WTC11 (cell line): ENCODE measurements at regions of chr18 and their contacts with region 1.

Region 1: GRCh38 chr18:37430357-37431076 is 135.1 kb downstream of the CELF4 start:
- DNase-seq: peak; percentile 63
- ATAC-seq: peak; percentile 89
- H3K4me3 Mint-ChIP-seq: no peak overlapping the region
- H3K27ac Mint-ChIP-seq: no peak overlapping the region
- H3K4me1 Mint-ChIP-seq: 0 out of 2 replicates have a peak, but pooled peaks cover 3% of the 10 kb centered on the region
- H3K27me3 Mint-ChIP-seq: no peaks in the 10 kb centered on the region
- CTCF ChIP-seq: no peak

Region 2: DNA sequence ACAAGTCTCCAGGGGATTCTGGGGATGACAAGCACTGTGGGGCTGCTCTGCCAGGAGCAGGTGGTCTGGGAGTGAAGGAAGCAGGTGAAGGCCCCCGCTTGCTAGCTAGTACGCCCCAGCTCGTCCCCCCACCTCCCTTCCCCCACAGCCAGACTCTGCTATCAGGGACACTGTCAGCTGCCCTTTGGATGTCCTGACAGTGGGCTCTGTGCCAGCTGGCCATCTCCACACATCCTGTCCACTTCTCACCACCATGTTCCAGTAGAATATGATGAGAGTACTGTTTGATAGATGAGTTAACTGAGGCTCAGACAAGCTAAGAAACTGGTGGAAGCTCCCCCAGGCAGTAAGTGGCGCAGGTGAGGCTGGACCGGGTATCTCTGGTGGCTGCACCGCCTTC is 141.1 kb before region 1 on chr18:
- CTCF ChIA-PET with region 1: no interaction called
- POLR2A ChIA-PET with region 1: no interaction called
- DNase-seq: no peak
- ATAC-seq: no peak
- H3K4me3 Mint-ChIP-seq: no peak overlapping the region
- H3K27ac Mint-ChIP-seq: no peak overlapping the region
- H3K4me1 Mint-ChIP-seq: peaks cover 4% of the 10 kb centered on the region; the same call in 1 of the 2 replicates
- H3K27me3 Mint-ChIP-seq: no peaks in the 10 kb centered on the region; the same call in 1 of the 2 replicates
- CTCF ChIP-seq: no peak

Region 3: GRCh38 chr18:37445368-37445767 is 14.9 kb after region 1 on chr18:
- CTCF ChIA-PET with region 1: interaction called, 14 read pairs
- POLR2A ChIA-PET with region 1: no interaction called
- DNase-seq: no peak
- ATAC-seq: no peak
- H3K4me3 Mint-ChIP-seq: no peak overlapping the region
- H3K27ac Mint-ChIP-seq: no peak overlapping the region
- H3K4me1 Mint-ChIP-seq: peaks cover 41% of the 10 kb centered on the region
- H3K27me3 Mint-ChIP-seq: peaks cover 7% of the 10 kb centered on the region; the same call in 1 of the 2 replicates
- CTCF ChIP-seq: no peak

Region 4: DNA sequence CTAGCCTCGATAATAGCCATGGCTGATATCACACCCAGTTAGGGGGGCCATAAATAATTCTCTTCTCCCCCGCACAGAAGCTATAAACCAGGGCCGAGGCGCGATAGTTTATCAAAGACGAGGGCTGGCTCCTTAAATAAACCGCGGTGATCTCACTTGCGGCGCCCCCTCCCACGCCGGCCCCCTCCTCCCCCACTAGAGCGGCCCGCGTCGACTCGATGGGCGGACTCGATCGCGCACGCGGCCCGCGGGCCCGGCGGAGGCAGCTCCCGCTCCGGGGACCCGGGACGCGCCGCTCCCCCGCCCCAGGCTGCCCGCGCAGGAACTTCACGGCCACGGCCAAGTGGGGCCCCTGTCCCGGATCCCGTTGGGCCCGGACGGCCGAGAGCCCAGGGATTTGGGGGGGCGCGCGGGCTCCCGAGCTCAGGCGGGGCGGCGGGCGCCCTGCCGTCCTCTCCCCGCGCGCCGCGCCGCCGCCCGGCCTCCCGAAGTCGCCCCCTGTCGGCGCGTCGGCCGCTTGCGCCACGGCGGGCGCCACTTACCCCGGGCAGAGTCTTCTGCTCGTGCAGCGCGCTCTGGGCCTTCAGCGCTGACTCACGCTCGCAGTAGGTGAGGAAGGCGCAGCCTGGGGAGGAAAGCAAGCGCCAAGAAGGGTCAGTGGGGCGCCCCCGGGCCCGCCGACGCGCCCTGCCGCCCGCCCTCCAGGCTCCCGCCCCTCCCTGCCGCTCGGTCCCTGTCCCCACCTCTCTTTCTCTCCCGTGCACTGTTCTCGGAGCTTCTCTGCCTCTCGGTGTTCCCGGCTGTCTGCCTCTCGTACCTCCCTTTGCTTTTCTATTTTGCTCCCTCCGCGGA is 54.7 kb after region 1 on chr18:
- CTCF ChIA-PET with region 1: interaction called, 10 read pairs
- POLR2A ChIA-PET with region 1: no interaction called
- DNase-seq: peak; percentile 72
- ATAC-seq: peak; percentile 68
- H3K4me3 Mint-ChIP-seq: peak overlapping the region; percentile 66
- H3K27ac Mint-ChIP-seq: no peak overlapping the region
- H3K4me1 Mint-ChIP-seq: peaks cover 85% of the 10 kb centered on the region
- H3K27me3 Mint-ChIP-seq: peaks cover 37% of the 10 kb centered on the region
- CTCF ChIP-seq: peak; percentile 50; the same call in 1 of the 2 replicates

Region 5: DNA sequence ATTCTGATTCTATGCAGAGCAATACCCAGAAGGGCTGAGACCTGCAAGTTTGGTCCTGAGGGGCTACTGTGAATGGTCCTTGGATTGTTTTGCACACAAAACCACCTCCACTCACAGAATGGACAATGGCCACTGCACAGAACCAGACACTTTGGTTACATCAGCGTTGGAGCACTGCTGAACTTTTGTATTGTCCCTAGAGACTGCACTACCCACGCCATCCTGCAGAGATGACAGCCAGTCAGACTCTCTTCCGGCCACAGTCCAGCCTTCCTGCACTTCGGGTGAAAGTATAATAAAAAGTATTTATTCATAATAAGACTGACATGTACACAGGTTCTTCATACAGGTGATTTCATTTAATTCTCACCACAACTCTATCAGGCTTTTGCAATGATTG is 99.3 kb after region 1 on chr18:
- CTCF ChIA-PET with region 1: interaction called, 14 read pairs
- POLR2A ChIA-PET with region 1: no interaction called
- DNase-seq: no peak
- ATAC-seq: no peak
- H3K4me3 Mint-ChIP-seq: no peak overlapping the region
- H3K27ac Mint-ChIP-seq: no peak overlapping the region
- H3K4me1 Mint-ChIP-seq: peaks cover 38% of the 10 kb centered on the region
- H3K27me3 Mint-ChIP-seq: peaks cover 9% of the 10 kb centered on the region
- CTCF ChIP-seq: no peak